ENCODE measurements at regions of chr2 and their contacts with region 1.

Region 1: DNA sequence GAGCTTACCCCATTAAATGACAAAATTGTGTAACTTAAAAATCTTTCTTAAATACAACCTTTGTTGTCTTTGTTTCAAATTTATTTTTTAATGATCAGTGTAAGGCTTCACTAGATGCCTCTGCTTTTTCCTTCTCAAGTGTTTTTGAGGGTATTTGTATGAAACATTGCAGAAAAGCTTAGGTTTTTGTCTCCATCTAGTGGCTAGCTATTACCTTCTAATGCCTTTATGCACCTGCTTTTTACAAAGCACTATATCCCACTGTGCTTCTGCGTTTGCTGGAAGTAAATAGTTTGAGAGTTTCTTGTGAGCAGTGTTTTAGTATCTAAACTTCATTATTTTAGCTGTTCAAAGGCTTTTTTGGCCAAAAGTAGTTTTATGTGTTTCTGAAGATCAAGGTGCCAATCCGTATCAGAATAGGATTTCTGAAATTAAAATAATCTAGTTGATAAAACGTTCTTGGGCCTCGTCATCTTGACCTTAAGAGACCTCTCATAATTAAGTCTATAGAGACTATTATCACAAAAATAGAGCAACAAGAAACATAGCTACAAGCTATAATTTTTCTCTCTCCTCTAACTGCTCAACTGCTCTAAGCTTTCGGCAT is 47.0 kb downstream of the IWS1 start:
- DNase-seq: peak; percentile 30
- H3K27ac ChIP-seq: no peak overlapping the region
- CTCF ChIP-seq: peak; percentile 74

Region 2: DNA sequence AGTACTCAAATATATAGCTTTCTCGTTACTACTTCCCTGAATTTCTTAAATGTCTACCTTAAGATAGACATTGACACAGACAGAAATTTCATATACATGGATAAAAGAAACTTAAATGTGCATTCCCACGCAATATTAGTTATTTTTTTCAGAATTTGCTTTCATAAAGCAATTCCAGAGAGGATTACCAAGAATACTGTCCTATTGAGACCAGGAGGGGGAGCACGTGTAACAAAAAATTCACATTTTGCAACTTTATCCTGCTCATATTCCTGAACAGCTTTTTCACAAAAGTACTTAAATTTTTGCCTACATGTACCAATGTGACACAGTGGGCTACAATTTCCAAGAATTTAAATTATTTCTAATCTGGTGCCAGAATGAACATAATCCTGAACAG is 154.7 kb before region 1 on chr2:
- CTCF ChIA-PET with region 1: interaction called, 11 read pairs
- POLR2A ChIA-PET with region 1: no interaction called
- DNase-seq: peak; percentile 56
- H3K27ac ChIP-seq: no peak overlapping the region
- CTCF ChIP-seq: peak; percentile 64

Region 3: GRCh38 chr2:127422810-127423475 is 56.4 kb before region 1 on chr2:
- CTCF ChIA-PET with region 1: interaction called, 13 read pairs
- POLR2A ChIA-PET with region 1: no interaction called
- DNase-seq: no peak
- H3K27ac ChIP-seq: peak overlapping the region; percentile 69
- CTCF ChIP-seq: no peak